Naive thymus-derived CD4-positive, alpha-beta T cell (primary cell): ENCODE measurements at regions of chr6 and their contacts with region 1.

Region 1: DNA sequence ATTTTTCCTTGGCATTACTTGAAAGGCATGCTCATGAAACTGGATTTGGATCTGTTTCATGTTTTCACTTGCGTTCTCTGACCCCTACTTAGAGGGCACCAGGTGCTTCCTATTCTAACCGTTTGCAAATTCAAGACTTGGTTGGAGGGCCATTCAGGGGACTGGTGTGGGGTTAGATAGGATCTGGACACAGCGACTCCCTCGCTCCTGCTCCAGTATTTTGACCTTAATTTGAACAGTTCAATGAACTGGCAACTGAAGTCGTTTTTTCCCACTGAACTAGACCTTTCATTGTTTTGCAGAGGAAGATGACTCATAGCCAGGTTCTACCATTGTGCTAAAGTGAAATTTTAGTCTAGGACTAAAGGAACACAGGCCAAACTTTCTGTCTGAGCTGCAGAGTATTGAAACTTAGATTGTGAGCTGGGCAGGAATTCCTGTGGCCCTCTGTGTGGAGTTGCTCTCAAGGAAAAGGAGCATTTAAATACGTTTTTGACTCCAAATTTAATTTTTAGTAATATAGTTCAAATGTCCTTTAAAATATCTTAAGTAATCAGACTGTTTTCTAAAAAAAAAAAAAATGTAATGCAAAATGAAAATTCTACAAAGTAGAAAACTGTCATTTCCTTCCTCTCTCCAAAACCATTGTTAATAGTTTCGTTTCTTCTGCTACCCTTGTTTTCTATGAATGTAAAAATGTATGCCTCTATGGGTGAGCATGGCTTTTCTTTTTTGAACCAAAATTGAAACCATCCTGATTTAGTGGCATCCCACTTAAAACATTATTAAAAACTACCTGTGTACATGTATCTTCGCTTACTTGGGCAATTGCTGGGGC is 64.8 kb downstream of the UTRN start:
- DNase-seq: peak in 6 of 9 donors; percentile 30 to 55 (median 46)
- ATAC-seq: peak; percentile 59
- H3K4me3 ChIP-seq: peak overlapping the region; percentile 53
- H3K4me3 Mint-ChIP-seq: peak overlapping the region; percentile 72 to 97 (median 86)
- H3K27ac ChIP-seq: peak overlapping the region; percentile 76
- H3K27ac Mint-ChIP-seq: peak overlapping the region; percentile 84 to 99 (median 96)
- H3K4me1 ChIP-seq: peaks cover 76 to 87% of the 10 kb centered on the region in 2 donors
- H3K4me1 Mint-ChIP-seq: peaks cover 74 to 95% (median 81%) of the 10 kb centered on the region in 7 donors
- H3K27me3 ChIP-seq: no peaks in the 10 kb centered on the region
- H3K27me3 Mint-ChIP-seq: no peaks in the 10 kb centered on the region

Region 2: GRCh38 chr6:143549221-143549941 is 800.5 kb before region 1 on chr6:
- CTCF ChIA-PET with region 1: no interaction called
- POLR2A ChIA-PET with region 1: no interaction called
- intact Hi-C with region 1: loop called in 1 of 2 experiments (anchors 10 kb)
- DNase-seq: peak in 1 of 9 donors; percentile 45
- ATAC-seq: peak; percentile 47
- H3K4me3 ChIP-seq: no peak overlapping the region
- H3K4me3 Mint-ChIP-seq: peak overlapping the region in 3 of 10 donors; percentile 4 to 43 (median 10)
- H3K27ac ChIP-seq: no peak overlapping the region
- H3K27ac Mint-ChIP-seq: peak overlapping the region in 4 of 9 donors; percentile 20 to 66 (median 66)
- H3K4me1 ChIP-seq: peaks cover 43 to 71% of the 10 kb centered on the region in 2 donors
- H3K4me1 Mint-ChIP-seq: peaks cover 37 to 86% (median 73%) of the 10 kb centered on the region in 7 donors
- H3K27me3 ChIP-seq: no peaks in the 10 kb centered on the region
- H3K27me3 Mint-ChIP-seq: no peaks in the 10 kb centered on the region

Region 3: GRCh38 chr6:144334131-144334708 is 15.7 kb before region 1 on chr6:
- CTCF ChIA-PET with region 1: no interaction called
- POLR2A ChIA-PET with region 1: interaction called, 42 read pairs
- intact Hi-C with region 1: loop called in 1 of 2 experiments (anchors 2 kb)
- DNase-seq: peak; percentile 24 to 87 (median 83)
- ATAC-seq: peak; percentile 91
- H3K4me3 ChIP-seq: peak overlapping the region; percentile 59
- H3K4me3 Mint-ChIP-seq: peak overlapping the region; percentile 80 to 93 (median 86)
- H3K27ac ChIP-seq: peak overlapping the region; percentile 75
- H3K27ac Mint-ChIP-seq: peak overlapping the region; percentile 87 to 98 (median 96)
- H3K4me1 ChIP-seq: peaks cover 34 to 41% of the 10 kb centered on the region in 2 donors
- H3K4me1 Mint-ChIP-seq: peaks cover 40 to 74% (median 59%) of the 10 kb centered on the region in 7 donors
- H3K27me3 ChIP-seq: no peaks in the 10 kb centered on the region
- H3K27me3 Mint-ChIP-seq: no peaks in the 10 kb centered on the region

Region 4: GRCh38 chr6:144394210-144394609 is 44.3 kb after region 1 on chr6:
- CTCF ChIA-PET with region 1: no interaction called
- POLR2A ChIA-PET with region 1: no interaction called
- intact Hi-C with region 1: loop called in 1 of 2 experiments (anchors 5 kb)
- DNase-seq: no peak
- ATAC-seq: no peak
- H3K4me3 ChIP-seq: no peak overlapping the region
- H3K4me3 Mint-ChIP-seq: peak overlapping the region in 1 of 10 donors; percentile 12
- H3K27ac ChIP-seq: no peak overlapping the region
- H3K27ac Mint-ChIP-seq: no peak overlapping the region
- H3K4me1 ChIP-seq: peaks cover 18 to 20% of the 10 kb centered on the region in 2 donors
- H3K4me1 Mint-ChIP-seq: peaks cover 19 to 75% (median 59%) of the 10 kb centered on the region in 7 donors
- H3K27me3 ChIP-seq: no peaks in the 10 kb centered on the region
- H3K27me3 Mint-ChIP-seq: no peaks in the 10 kb centered on the region

Region 5: DNA sequence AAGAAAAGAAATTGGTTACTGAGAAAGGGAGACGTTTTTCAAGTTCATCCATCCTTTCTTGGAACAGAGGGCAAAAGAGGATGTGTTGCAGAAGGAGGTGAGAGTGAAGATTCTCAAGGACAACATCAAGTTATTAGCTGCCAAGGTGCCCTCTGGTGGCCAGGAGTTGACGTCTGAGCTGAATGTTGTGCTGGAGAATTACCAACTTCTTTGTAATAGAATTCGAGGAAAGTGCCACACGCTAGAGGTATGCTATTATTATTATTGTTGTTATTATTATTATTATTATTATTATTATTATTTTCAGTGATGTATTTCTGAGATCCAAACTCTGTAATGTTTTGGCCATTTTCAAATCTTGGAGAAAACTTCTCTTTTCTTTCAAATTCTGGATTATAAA is 132.2 kb after region 1 on chr6:
- CTCF ChIA-PET with region 1: no interaction called
- POLR2A ChIA-PET with region 1: no interaction called
- intact Hi-C with region 1: loop called in 1 of 2 experiments (anchors 5 kb)
- DNase-seq: peak; percentile 27 to 67 (median 61)
- ATAC-seq: peak; percentile 77
- H3K4me3 ChIP-seq: no peak overlapping the region
- H3K4me3 Mint-ChIP-seq: no peak overlapping the region
- H3K27ac ChIP-seq: no peak overlapping the region
- H3K27ac Mint-ChIP-seq: peak overlapping the region in 6 of 9 donors; percentile 12 to 88 (median 38)
- H3K4me1 ChIP-seq: no peaks in the 10 kb centered on the region
- H3K4me1 Mint-ChIP-seq: peaks cover 0 to 20% (median 4%) of the 10 kb centered on the region in 7 donors
- H3K27me3 ChIP-seq: no peaks in the 10 kb centered on the region
- H3K27me3 Mint-ChIP-seq: no peaks in the 10 kb centered on the region